Caco-2 (cell line): ENCODE measurements at regions of chr10 and their contacts with region 1.

Region 1: GRCh38 chr10:5614155-5614721 is 52.2 kb downstream of the ASB13 start:
- DNase-seq: no peak
- H3K4me3 ChIP-seq: no peak overlapping the region
- H3K4me3 Mint-ChIP-seq: no peak overlapping the region
- H3K27ac Mint-ChIP-seq: no peak overlapping the region
- H3K4me1 ChIP-seq: peaks cover 53% of the 10 kb centered on the region
- H3K4me1 Mint-ChIP-seq: peaks cover 35% of the 10 kb centered on the region
- H3K27me3 ChIP-seq: no peaks in the 10 kb centered on the region
- H3K27me3 Mint-ChIP-seq: no peaks in the 10 kb centered on the region
- CTCF ChIP-seq: no peak

Region 2: GRCh38 chr10:5575482-5576166 is 38.6 kb before region 1 on chr10:
- CTCF ChIA-PET with region 1: no interaction called
- POLR2A ChIA-PET with region 1: no interaction called
- intact Hi-C with region 1: loop called (anchors 1 kb)
- DNase-seq: no peak
- H3K4me3 ChIP-seq: no peak overlapping the region
- H3K4me3 Mint-ChIP-seq: no peak overlapping the region
- H3K27ac Mint-ChIP-seq: peak overlapping the region; percentile 93
- H3K4me1 ChIP-seq: peaks cover 51% of the 10 kb centered on the region
- H3K4me1 Mint-ChIP-seq: peaks cover 27% of the 10 kb centered on the region
- H3K27me3 ChIP-seq: no peaks in the 10 kb centered on the region
- H3K27me3 Mint-ChIP-seq: no peaks in the 10 kb centered on the region
- CTCF ChIP-seq: no peak

Region 3: DNA sequence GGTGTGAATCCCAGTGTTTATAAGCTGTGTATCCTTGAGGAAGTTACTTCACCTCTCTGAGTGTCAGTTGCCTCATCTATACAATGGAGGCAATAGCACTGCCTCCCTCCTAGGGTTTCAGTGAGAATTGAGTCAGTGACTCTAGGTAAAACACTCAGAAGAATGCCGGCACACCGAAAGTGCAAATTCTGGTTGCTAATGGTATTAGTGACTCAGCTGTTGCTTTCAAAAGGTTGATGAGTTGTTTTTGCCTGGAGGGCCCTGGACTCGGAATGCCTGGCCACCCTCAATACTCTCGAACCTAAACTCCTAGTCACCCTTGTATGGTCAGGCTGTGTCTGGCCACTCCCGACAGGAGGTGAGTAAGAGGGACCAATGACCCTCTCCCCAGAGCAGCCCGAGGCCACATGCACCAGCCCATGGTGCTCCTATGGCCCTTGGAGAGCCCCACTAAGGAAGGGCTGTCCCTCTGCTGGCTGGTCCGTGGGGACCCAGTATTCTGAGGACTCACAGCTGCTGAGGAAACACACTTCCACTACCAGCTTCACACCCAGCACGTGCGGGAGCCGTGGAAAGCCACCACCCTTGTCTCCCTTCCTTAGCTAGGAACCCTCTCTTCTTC is 29.2 kb before region 1 on chr10:
- CTCF ChIA-PET with region 1: no interaction called
- POLR2A ChIA-PET with region 1: no interaction called
- intact Hi-C with region 1: loop called (anchors 2 kb)
- DNase-seq: no peak
- H3K4me3 ChIP-seq: no peak overlapping the region
- H3K4me3 Mint-ChIP-seq: no peak overlapping the region
- H3K27ac Mint-ChIP-seq: no peak overlapping the region
- H3K4me1 ChIP-seq: peaks cover 43% of the 10 kb centered on the region
- H3K4me1 Mint-ChIP-seq: peaks cover 36% of the 10 kb centered on the region
- H3K27me3 ChIP-seq: no peaks in the 10 kb centered on the region
- H3K27me3 Mint-ChIP-seq: no peaks in the 10 kb centered on the region
- CTCF ChIP-seq: no peak

Region 4: DNA sequence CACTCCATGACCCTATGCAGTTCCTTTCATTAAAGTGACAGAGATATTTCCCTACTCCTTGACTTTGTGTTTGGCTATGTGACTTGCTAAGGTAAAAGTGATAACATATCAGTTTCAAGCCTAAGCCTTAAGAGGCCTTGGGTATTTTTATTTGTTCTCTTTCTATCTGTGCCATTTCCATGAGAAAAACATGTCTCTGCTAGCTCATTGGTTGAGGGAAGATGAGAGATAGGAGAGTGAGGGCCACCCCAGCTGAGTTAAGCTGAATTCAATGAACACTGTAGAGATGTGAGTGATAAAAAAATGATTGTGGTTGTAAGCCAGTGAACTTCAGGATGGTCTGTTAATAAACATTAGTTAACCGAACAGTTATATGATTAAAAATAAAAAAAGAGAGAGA is 83.8 kb after region 1 on chr10:
- CTCF ChIA-PET with region 1: no interaction called
- POLR2A ChIA-PET with region 1: interaction called, 16 read pairs
- intact Hi-C with region 1: no loop called
- DNase-seq: no peak
- H3K4me3 ChIP-seq: no peak overlapping the region
- H3K4me3 Mint-ChIP-seq: no peak overlapping the region
- H3K27ac Mint-ChIP-seq: no peak overlapping the region
- H3K4me1 ChIP-seq: peaks cover 15% of the 10 kb centered on the region
- H3K4me1 Mint-ChIP-seq: peaks cover 31% of the 10 kb centered on the region
- H3K27me3 ChIP-seq: no peaks in the 10 kb centered on the region
- H3K27me3 Mint-ChIP-seq: no peaks in the 10 kb centered on the region
- CTCF ChIP-seq: no peak